Transverse colon (tissue), 4 donors: ENCODE measurements at regions of chr3 and their contacts with region 1.

Region 1: DNA sequence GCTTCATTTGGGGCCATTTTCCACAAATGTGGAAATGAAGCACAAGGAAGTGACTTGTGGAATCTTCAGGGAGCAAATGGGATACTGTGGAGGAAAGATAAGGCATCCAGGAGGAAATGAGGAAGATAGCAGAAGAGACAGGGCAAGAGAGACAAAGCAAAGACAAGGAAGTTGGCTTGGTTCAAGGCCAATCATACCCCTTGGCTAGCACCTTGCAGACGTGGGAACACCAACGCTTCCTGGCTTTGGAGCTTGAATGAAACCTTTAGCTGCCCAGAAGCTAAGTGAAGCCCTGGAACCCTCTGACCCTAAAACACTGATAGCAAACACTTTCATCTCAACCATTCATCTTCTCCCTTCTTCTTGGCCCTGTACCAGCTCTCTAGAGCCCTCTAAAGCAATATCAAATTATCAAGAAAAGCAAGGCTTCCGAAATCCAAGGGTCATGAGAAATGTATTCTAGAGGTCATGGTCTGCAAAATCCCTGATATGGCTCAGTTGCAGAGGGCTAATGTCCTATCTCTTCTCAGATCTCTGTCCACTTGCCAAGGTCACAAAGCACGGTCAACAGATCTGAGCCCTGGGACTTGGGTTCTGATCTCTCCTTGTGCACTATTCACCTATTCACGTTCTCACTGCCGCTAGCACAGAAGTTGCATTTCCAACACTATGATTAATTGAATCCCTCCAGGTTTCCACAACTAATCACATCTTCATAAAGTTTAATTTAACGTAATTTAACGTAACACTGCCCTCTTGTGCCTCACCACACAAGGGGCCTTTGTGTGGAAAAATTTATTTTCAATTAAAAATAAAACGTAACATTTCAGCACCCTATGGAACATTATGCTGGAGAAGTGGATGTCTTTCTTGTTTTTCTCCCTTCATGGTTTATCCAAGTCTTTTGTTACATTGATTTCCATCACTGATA is 557.6 kb upstream of the ADAMTS9 start:
- DNase-seq: no peak
- H3K4me3 ChIP-seq: no peak overlapping the region
- H3K27ac ChIP-seq: no peak overlapping the region
- H3K4me1 ChIP-seq: peaks cover 0 to 4% (median 0%) of the 10 kb centered on the region in 4 donors
- H3K27me3 ChIP-seq: no peaks in the 10 kb centered on the region
- CTCF ChIP-seq: peak; percentile 26 to 47 (median 35)
- EP300 ChIP-seq: no peak
- POLR2A ChIP-seq: no peak

Region 2: DNA sequence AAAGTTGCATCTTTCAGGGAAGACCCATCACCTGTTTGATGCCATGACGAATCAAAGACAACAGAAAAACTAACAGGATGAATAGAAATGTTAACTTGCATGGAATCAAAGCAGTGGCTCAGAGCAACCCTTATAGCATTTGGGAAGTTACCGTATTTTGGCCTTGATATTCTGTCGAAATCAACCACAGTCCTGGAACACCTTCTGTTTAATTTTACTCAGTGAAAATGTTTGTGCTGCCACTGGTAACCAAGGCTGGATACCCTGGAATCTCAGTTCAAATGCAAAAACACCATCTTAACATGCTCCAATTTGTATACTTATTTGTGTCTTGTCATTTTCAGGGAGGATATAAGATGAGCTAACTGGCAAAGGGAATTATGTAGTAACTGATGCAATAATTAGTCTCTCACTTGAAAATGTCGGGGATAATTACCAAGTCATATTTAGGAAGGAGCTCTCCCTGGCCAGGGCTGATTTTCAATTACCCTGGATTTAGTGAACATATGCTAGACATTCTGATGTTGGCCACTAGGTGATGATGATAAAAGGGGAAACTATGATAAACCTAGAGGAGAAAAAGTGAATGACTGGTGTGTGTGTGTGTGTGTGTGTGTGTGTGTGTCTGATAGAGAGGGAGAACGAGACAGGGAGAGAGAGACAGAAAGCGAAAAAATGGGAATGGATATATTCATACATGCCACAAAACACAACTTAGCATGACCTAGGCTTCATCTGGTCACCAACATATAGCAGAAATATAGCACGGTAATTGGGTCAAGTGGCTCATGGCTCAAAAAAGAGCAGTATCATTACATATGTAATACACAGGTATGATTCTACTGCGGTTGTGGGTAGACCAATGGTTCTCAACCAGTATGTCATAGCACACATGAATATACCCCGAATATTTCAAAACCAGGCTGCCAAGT is 1001.1 kb before region 1 on chr3:
- in situ Hi-C with region 1: no loop called
- intact Hi-C with region 1: no loop called
- DNase-seq: no peak
- H3K4me3 ChIP-seq: no peak overlapping the region
- H3K27ac ChIP-seq: peak overlapping the region in 2 of 4 donors; percentile 23 to 84
- H3K4me1 ChIP-seq: peaks cover 0 to 19% (median 2%) of the 10 kb centered on the region in 4 donors
- H3K27me3 ChIP-seq: no peaks in the 10 kb centered on the region
- CTCF ChIP-seq: peak in 4 of 5 experiments; percentile 20 to 56 (median 30)
- EP300 ChIP-seq: no peak
- POLR2A ChIP-seq: no peak

Region 3: GRCh38 chr3:64705946-64706345 is 539.5 kb before region 1 on chr3:
- in situ Hi-C with region 1: no loop called
- intact Hi-C with region 1: loop called (anchors 2 kb)
- DNase-seq: no peak
- H3K4me3 ChIP-seq: no peak overlapping the region
- H3K27ac ChIP-seq: no peak overlapping the region
- H3K4me1 ChIP-seq: no peaks in the 10 kb centered on the region
- H3K27me3 ChIP-seq: no peaks in the 10 kb centered on the region
- CTCF ChIP-seq: no peak
- EP300 ChIP-seq: no peak
- POLR2A ChIP-seq: no peak

Region 4: GRCh38 chr3:65196688-65197087 is 48.7 kb before region 1 on chr3:
- in situ Hi-C with region 1: no loop called
- intact Hi-C with region 1: no loop called
- DNase-seq: no peak
- H3K4me3 ChIP-seq: no peak overlapping the region
- H3K27ac ChIP-seq: no peak overlapping the region
- H3K4me1 ChIP-seq: no peaks in the 10 kb centered on the region
- H3K27me3 ChIP-seq: no peaks in the 10 kb centered on the region
- CTCF ChIP-seq: no peak
- EP300 ChIP-seq: no peak
- POLR2A ChIP-seq: no peak

Region 5: GRCh38 chr3:65636326-65636725 is 390.9 kb after region 1 on chr3:
- in situ Hi-C with region 1: no loop called
- intact Hi-C with region 1: no loop called
- DNase-seq: no peak
- H3K4me3 ChIP-seq: no peak overlapping the region
- H3K27ac ChIP-seq: no peak overlapping the region
- H3K4me1 ChIP-seq: no peaks in the 10 kb centered on the region
- H3K27me3 ChIP-seq: no peaks in the 10 kb centered on the region
- CTCF ChIP-seq: no peak
- EP300 ChIP-seq: no peak
- POLR2A ChIP-seq: no peak